ENCODE measurements at regions of chr10 and their contacts with region 1.

Region 1: DNA sequence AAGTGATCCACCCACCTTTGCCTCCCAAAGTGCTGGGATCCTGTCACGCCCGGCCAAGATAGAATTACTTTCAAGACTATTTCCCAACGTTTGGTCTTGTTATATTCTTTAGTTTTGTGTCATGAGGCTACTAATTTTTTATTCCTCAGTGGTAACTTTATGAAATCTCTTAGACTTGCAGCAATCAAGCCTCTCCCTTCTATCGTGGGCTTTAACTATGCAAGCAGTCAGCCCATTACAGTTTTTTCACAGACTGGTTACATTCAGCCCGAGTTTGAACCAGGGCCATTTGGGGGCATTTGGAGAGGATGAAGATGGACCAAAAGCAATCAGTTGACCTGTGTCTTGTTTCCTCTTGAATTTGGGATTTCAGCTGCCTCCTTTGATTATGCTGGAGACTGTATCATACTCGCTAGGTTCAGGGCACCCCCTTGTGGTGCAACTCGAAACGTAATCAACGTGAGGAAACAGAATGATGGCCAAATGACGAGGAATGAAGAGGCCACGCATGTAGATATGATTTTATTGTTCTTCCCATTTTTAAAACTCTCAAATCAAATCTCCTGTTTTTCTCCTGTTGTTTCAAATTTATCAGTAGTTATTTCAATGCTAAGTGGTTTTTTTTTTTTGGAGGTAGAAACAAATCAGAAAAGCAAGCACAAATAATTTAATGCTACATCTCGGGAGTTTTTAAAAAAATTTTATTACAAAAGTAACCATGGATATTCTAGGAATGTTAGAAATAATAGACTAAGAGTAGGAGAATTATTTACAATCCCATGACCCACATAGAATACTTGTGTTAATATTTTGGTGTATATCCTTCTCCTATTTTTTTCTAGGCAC is 151.6 kb downstream of the KIAA1217 start:
- DNase-seq: peak; percentile 62 to 76
- ATAC-seq: peak; percentile 45 to 83 (median 80)
- H3K4me3 ChIP-seq: no peak overlapping the region
- H3K27ac ChIP-seq: no peak overlapping the region
- H3K4me1 ChIP-seq: peaks cover 0 to 26% (median 7%) of the 10 kb centered on the region in 9 donors
- H3K27me3 ChIP-seq: no peaks in the 10 kb centered on the region
- CTCF ChIP-seq: peak; percentile 53 to 88 (median 74)

Region 2: DNA sequence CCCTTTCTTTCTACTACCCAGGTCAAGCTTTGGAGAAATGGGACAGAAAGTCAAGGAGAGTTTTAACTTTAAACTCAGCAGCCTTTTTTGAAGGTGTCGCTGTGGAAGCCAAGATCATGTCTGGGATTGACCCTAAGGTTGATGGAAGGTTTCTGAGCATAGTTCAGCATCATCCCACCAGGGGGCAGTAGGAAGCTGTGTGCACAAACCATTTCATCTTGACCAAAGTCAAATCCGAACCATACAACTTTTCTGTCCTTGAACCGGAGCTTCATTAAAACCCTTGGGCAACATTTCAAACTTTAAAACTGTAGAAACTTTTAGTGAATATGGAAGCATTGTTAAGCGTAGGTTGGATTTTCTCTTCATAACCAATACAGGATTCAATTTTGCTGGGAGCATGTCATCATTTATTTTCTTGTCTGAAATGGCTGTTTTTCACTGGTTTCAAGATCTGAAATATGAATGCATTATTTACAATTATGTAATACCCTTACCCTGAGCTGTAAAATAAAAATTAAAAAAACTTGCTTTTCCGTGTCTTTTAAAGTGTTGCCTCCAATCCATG is 365.9 kb before region 1 on chr10:
- intact Hi-C with region 1: loop called in 9 of 10 experiments (anchors 1 to 10 kb)
- DNase-seq: peak; percentile 24 to 61
- ATAC-seq: peak; percentile 55 to 89 (median 80)
- H3K4me3 ChIP-seq: peak overlapping the region in 1 of 10 donors; percentile 21
- H3K27ac ChIP-seq: peak overlapping the region in 1 of 10 donors; percentile 6
- H3K4me1 ChIP-seq: peaks cover 0 to 7% (median 0%) of the 10 kb centered on the region in 9 donors
- H3K27me3 ChIP-seq: no peaks in the 10 kb centered on the region
- CTCF ChIP-seq: peak; percentile 78 to 97 (median 90)

Region 3: GRCh38 chr10:24209946-24210491 is 150.5 kb before region 1 on chr10:
- intact Hi-C with region 1: loop called in 4 of 10 experiments (anchors 5 to 10 kb)
- DNase-seq: peak; percentile 28 to 30
- ATAC-seq: peak in 7 of 8 donors; percentile 11 to 43 (median 31)
- H3K4me3 ChIP-seq: peak overlapping the region; percentile 37 to 74 (median 63)
- H3K27ac ChIP-seq: peak overlapping the region; percentile 77 to 96 (median 92)
- H3K4me1 ChIP-seq: peaks cover 9 to 87% (median 44%) of the 10 kb centered on the region in 9 donors
- H3K27me3 ChIP-seq: peaks cover 0 to 22% (median 0%) of the 10 kb centered on the region in 7 donors
- CTCF ChIP-seq: no peak

Region 4: DNA sequence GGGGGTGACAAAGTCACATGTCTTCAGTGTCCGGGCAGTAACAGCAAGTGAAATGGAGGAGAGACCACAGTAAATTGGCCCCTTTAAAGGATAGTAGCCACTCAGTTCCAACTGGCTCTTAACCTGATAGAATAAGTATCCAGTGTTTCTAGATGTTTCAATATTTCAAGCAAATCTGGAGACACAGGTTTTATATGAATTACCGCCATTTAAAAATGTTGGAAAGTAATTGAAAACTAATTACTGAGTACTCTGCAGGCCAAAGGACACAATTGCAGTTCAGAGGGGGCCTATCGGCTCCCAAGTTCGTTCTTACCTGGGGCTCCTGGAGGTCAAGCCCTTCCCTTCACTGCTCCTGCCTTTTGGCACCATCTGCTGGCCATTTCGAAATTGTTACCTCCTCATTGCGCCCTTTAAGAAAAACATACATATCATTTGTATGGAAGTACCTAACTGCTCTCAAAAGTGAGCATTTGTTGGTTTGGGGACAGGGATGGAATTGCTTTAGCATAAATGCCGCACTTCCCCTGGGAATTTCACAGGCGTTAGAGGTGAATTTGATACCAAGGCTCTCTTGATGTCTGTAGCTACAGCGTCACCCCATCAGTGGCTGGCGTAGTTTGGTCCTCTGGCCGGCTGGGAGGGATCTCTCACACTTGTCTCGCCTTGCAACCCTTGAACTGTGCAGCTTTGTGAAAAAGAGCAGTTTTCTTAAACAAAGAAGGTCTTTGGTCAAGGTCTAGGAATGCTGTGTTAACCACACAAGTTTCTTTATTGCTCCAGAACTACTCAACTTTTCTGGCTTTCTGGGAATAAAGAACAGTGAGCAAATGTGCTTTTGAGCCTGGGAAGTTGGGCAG is 143.2 kb after region 1 on chr10:
- intact Hi-C with region 1: loop called in 2 of 10 experiments (anchors 10 kb)
- DNase-seq: peak in 1 of 2 donors; percentile 16
- ATAC-seq: peak in 3 of 8 donors; percentile 29 to 64 (median 52)
- H3K4me3 ChIP-seq: no peak overlapping the region
- H3K27ac ChIP-seq: no peak overlapping the region
- H3K4me1 ChIP-seq: peaks cover 0 to 10% (median 0%) of the 10 kb centered on the region in 9 donors
- H3K27me3 ChIP-seq: no peaks in the 10 kb centered on the region
- CTCF ChIP-seq: peak; percentile 27 to 73 (median 62)

Region 5: DNA sequence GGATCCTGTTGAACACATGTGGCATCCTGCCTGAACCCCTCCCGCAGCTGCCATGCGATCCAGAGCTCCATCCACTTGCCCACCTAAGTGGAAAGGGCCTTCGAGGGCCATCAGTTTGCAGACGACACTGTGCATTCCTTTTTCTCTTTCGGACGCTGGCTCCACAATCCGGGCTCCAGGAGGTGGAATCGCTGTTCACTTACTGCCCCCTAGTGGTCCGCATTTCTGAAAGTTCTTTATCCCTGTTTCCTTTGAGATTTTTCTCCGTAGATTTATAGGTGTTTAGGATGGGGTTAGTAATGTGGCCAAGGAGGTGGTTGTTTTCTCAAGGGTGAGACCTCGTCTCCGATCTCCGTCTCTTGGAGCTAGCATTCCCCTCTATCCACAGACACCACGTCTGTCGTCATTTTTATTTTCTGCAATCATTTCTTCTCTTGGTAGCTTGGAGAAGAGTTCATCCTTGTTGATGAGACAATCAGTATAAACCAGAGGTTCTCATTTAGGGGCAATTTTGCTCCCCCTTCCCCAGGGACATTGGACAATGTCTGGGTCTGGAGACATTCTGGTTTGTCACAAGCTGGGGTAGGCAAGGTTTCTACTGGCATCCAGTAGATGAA is 158.6 kb after region 1 on chr10:
- intact Hi-C with region 1: loop called in 2 of 10 experiments (anchors 5 to 10 kb)
- DNase-seq: peak; percentile 18 to 75
- ATAC-seq: peak; percentile 21 to 77 (median 68)
- H3K4me3 ChIP-seq: no peak overlapping the region
- H3K27ac ChIP-seq: peak overlapping the region in 2 of 10 donors; percentile 2 to 10
- H3K4me1 ChIP-seq: peaks cover 0 to 11% (median 6%) of the 10 kb centered on the region in 9 donors
- H3K27me3 ChIP-seq: no peaks in the 10 kb centered on the region
- CTCF ChIP-seq: peak; percentile 69 to 85 (median 75)